ENCODE measurements at regions of chr16 and their contacts with region 1.

Region 1: GRCh38 chr16:4550591-4550990 is 5.5 kb upstream of the C16orf96 start:
- DNase-seq: no peak
- ATAC-seq: no peak
- H3K4me3 ChIP-seq: no peak overlapping the region
- H3K4me3 Mint-ChIP-seq: no peak overlapping the region
- H3K27ac ChIP-seq: no peak overlapping the region
- H3K27ac Mint-ChIP-seq: no peak overlapping the region
- H3K4me1 ChIP-seq: peaks cover 10% of the 10 kb centered on the region
- H3K4me1 Mint-ChIP-seq: peaks cover 5% of the 10 kb centered on the region
- H3K27me3 ChIP-seq: no peaks in the 10 kb centered on the region
- H3K27me3 Mint-ChIP-seq: no peaks in the 10 kb centered on the region
- CTCF ChIP-seq: no peak

Region 2: GRCh38 chr16:4500272-4500671 is 50.3 kb before region 1 on chr16:
- CTCF ChIA-PET with region 1: interaction called, 59 read pairs
- POLR2A ChIA-PET with region 1: interaction called, 9 read pairs
- intact Hi-C with region 1: no loop called
- DNase-seq: no peak
- ATAC-seq: no peak
- H3K4me3 ChIP-seq: no peak overlapping the region
- H3K4me3 Mint-ChIP-seq: no peak overlapping the region
- H3K27ac ChIP-seq: peak overlapping the region in 1 of 2 donors; percentile 37
- H3K27ac Mint-ChIP-seq: peak overlapping the region; percentile 97
- H3K4me1 ChIP-seq: peaks cover 81% of the 10 kb centered on the region
- H3K4me1 Mint-ChIP-seq: peaks cover 89% of the 10 kb centered on the region
- H3K27me3 ChIP-seq: no peaks in the 10 kb centered on the region
- H3K27me3 Mint-ChIP-seq: no peaks in the 10 kb centered on the region
- CTCF ChIP-seq: no peak

Region 3: GRCh38 chr16:4515611-4516233 is 34.9 kb before region 1 on chr16:
- CTCF ChIA-PET with region 1: interaction called, 6 read pairs
- POLR2A ChIA-PET with region 1: no interaction called
- intact Hi-C with region 1: loop called in 1 of 2 experiments (anchors 2 kb)
- DNase-seq: peak in 3 of 14 experiments; percentile 50 to 62 (median 56)
- ATAC-seq: peak; percentile 31
- H3K4me3 ChIP-seq: no peak overlapping the region
- H3K4me3 Mint-ChIP-seq: peak overlapping the region; percentile 69
- H3K27ac ChIP-seq: peak overlapping the region; percentile 61 to 81
- H3K27ac Mint-ChIP-seq: peak overlapping the region; percentile 88
- H3K4me1 ChIP-seq: peaks cover 67% of the 10 kb centered on the region
- H3K4me1 Mint-ChIP-seq: peaks cover 57% of the 10 kb centered on the region
- H3K27me3 ChIP-seq: no peaks in the 10 kb centered on the region
- H3K27me3 Mint-ChIP-seq: no peaks in the 10 kb centered on the region
- CTCF ChIP-seq: no peak

Region 4: GRCh38 chr16:4538350-4539235 is 12.0 kb before region 1 on chr16 and contains the start of gene CDIP1:
- CTCF ChIA-PET with region 1: interaction called, 15 read pairs
- POLR2A ChIA-PET with region 1: interaction called, 9 read pairs
- intact Hi-C with region 1: no loop called
- DNase-seq: peak; percentile 89 to 98 (median 94)
- ATAC-seq: peak; percentile 77
- H3K4me3 ChIP-seq: peak within 1 kb of the TSS; percentile 68
- H3K4me3 Mint-ChIP-seq: peak within 1 kb of the TSS; percentile 91
- H3K27ac ChIP-seq: peak within 1 kb of the TSS; percentile 87 to 89
- H3K27ac Mint-ChIP-seq: peak within 1 kb of the TSS; percentile 89
- H3K4me1 ChIP-seq: peaks cover 47% of the 10 kb centered on the region
- H3K4me1 Mint-ChIP-seq: peaks cover 40% of the 10 kb centered on the region
- H3K27me3 ChIP-seq: no peaks in the 10 kb centered on the region
- H3K27me3 Mint-ChIP-seq: no peaks in the 10 kb centered on the region
- CTCF ChIP-seq: no peak
- total RNA-seq, gene CDIP1: 19.5 to 22.4 TPM

Region 5: DNA sequence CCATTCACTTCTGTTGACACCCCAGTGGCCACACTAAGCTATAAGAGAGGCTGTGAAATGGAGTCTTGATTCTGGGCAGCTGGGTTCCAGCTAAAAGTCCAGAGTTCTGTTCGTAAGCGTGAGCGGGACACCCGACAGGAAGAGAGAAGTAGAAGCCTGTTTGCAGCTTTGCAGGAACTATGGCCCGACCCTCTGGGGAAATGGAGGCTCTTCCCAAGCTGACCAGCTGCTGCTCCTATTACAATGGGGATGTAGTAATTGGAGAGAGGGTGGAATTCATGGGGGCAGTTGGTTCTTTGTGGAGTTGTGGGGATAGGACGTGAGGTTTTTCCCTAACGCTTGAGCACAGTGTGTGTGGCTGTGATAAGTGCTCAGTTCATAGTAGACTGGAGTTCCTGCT is 35.7 kb after region 1 on chr16:
- CTCF ChIA-PET with region 1: no interaction called
- POLR2A ChIA-PET with region 1: no interaction called
- intact Hi-C with region 1: no loop called
- DNase-seq: no peak
- ATAC-seq: no peak
- H3K4me3 ChIP-seq: no peak overlapping the region
- H3K4me3 Mint-ChIP-seq: no peak overlapping the region
- H3K27ac ChIP-seq: no peak overlapping the region
- H3K27ac Mint-ChIP-seq: no peak overlapping the region
- H3K4me1 ChIP-seq: peaks cover 3% of the 10 kb centered on the region
- H3K4me1 Mint-ChIP-seq: no peaks in the 10 kb centered on the region
- H3K27me3 ChIP-seq: peaks cover 0 to 8% of the 10 kb centered on the region in 2 experiments
- H3K27me3 Mint-ChIP-seq: peaks cover 8% of the 10 kb centered on the region
- CTCF ChIP-seq: no peak